Left cardiac atrium (tissue), 4 donors: ENCODE measurements at regions of chr1 and their contacts with region 1.

Region 1: GRCh38 chr1:208203127-208203847 is 40.9 kb downstream of the PLXNA2 start:
- DNase-seq: peak; percentile 70
- ATAC-seq: peak; percentile 20 to 61

Region 2: GRCh38 chr1:208219659-208220282 is 16.5 kb after region 1 on chr1:
- intact Hi-C with region 1: loop called in 1 of 2 experiments (anchors 1 kb)
- DNase-seq: peak; percentile 83
- ATAC-seq: peak; percentile 80 to 93

Region 3: DNA sequence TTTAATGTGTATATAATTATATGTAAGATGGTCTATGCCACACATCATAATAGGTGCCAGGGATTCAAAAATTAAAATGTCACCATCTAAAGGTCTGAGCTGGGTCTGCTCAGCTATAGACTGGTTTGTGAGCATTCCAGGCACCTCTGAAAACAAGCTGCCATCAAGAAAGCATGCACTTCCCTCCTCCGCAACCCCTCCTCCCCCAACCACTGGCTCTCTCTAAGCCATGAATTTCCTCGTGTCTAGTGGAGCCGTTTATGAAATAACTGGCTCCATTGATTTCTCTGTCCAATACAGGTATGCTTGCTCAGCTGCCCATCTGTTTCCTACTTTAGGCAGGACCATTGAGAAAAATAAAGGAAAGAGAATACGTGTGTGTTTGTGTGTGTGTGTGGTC is 563.5 kb after region 1 on chr1:
- intact Hi-C with region 1: no loop called
- DNase-seq: no peak
- ATAC-seq: no peak